ENCODE measurements at regions of chr16 and their contacts with region 1.

Region 1: GRCh38 chr16:69186642-69187445 is at the start of gene SNTB2:
- DNase-seq: peak; percentile 90
- ATAC-seq: peak; percentile 80
- H3K4me3 ChIP-seq: peak within 1 kb of the TSS; percentile 75 to 81 (median 76)
- H3K4me3 Mint-ChIP-seq: peak within 1 kb of the TSS; percentile 99
- H3K27ac ChIP-seq: peak within 1 kb of the TSS; percentile 72 to 77
- H3K27ac Mint-ChIP-seq: peak within 1 kb of the TSS; percentile 100
- H3K4me1 ChIP-seq: peaks cover 17 to 29% of the 10 kb centered on the region in 2 donors
- H3K4me1 Mint-ChIP-seq: peaks cover 32% of the 10 kb centered on the region
- H3K27me3 ChIP-seq: no peaks in the 10 kb centered on the region
- H3K27me3 Mint-ChIP-seq: no peaks in the 10 kb centered on the region
- CTCF ChIP-seq: no peak
- total RNA-seq, gene SNTB2: 16.2 and 19.3 TPM in 2 replicates

Region 2: DNA sequence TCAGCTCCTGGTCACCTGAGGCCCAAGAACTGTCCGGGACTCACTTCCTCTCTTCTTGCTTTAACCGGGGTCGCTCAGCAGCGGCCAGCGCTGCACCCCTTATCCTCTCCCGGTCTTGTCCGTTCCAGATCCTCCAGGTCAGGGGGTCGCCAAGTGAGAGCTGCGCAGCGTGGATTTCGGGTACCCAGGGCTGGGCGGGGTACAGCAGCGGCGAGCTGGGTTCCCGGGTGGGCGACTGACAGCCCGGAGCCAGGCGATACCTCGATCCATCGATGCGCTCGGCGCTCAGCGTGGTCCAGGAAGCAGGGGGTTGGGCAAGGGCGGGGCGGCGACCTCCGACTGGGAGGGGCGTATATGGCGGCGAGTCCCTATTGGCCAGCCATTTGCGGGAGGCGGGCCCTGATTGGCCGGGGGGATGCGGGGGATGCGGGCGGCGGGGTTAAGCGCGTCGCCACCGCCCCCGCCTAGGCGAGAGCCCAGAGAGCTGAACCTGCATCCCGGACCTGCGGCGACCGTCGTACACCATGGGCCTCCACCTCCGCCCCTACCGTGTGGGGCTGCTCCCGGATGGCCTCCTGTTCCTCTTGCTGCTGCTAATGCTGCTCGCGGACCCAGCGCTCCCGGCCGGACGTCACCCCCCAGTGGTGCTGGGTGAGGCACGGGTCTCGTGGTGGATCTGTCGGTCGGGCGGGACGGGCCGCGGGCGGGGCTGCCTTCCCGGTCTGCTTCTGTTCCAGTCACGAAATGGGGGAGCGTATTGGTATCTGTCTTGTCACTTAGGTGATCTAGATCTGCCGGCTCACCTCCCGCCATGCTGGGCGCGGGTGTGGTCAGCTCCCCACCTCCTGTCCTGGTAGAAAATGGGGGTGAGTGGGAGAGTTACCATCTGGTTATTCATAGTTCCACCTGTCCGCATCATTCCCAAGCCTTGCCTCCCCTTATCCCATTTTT is 941.7 kb before region 1 on chr16 and contains the start of gene PLA2G15:
- CTCF ChIA-PET with region 1: no interaction called
- POLR2A ChIA-PET with region 1: interaction called, 10 read pairs
- intact Hi-C with region 1: no loop called
- DNase-seq: peak; percentile 97
- ATAC-seq: peak; percentile 98
- H3K4me3 ChIP-seq: peak within 1 kb of the TSS; percentile 78 to 97 (median 96)
- H3K4me3 Mint-ChIP-seq: peak within 1 kb of the TSS; percentile 97
- H3K27ac ChIP-seq: peak within 1 kb of the TSS; percentile 12 to 28
- H3K27ac Mint-ChIP-seq: peak within 1 kb of the TSS; percentile 50
- H3K4me1 ChIP-seq: peaks cover 25 to 33% of the 10 kb centered on the region in 2 donors
- H3K4me1 Mint-ChIP-seq: peaks cover 32% of the 10 kb centered on the region
- H3K27me3 ChIP-seq: no peaks in the 10 kb centered on the region
- H3K27me3 Mint-ChIP-seq: no peaks in the 10 kb centered on the region
- CTCF ChIP-seq: no peak
- total RNA-seq, gene PLA2G15: 10.8 and 12.5 TPM in 2 replicates

Region 3: DNA sequence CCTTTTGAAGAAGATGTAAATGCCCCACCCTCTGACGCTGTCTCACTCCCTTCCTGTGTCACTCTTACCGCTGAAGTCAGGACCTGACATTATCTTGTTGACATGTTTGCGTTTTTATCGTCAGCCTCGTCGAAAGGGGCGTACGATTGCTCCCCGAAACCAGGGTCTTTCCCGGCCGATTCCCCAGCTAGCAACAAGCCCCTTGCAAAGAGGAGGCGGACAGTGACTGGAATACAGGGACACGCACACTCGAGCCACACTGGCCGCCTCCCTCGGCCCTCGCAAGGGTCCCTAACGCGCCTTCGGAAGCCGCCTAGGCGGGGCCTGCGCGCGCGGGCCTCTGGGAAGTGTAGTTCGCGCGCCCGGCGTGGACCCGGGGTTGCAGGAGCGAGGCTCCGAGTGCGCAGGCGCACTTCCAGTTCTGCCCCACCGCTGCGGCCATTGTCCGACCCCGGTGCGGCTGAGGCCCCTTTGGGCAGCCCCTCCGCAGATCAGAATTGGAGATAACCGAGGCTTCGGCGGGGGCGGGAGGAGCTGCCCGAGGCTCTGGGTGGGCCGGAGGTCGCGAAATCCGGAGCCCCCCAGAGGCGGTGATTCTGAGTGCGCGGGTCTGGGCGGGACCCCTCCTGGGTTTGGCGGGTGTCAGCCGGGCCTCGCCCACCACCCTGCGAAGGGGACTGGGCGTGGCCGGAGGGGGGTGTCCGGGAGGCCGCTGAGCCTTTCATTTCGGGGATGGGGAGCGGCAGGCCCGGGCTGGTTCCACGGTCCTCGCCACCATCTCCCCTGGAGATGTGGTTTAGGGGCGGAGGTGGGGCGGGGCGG is 647.8 kb before region 1 on chr16 and contains the start of gene ZFP90:
- CTCF ChIA-PET with region 1: no interaction called
- POLR2A ChIA-PET with region 1: no interaction called
- intact Hi-C with region 1: loop called (anchors 2 kb)
- DNase-seq: peak; percentile 91
- ATAC-seq: peak; percentile 96
- H3K4me3 ChIP-seq: peak within 1 kb of the TSS; percentile 67 to 97 (median 90)
- H3K4me3 Mint-ChIP-seq: peak within 1 kb of the TSS; percentile 95
- H3K27ac ChIP-seq: peak within 1 kb of the TSS; percentile 80 to 82
- H3K27ac Mint-ChIP-seq: peak within 1 kb of the TSS; percentile 97
- H3K4me1 ChIP-seq: peaks cover 8 to 16% of the 10 kb centered on the region in 2 donors
- H3K4me1 Mint-ChIP-seq: peaks cover 15% of the 10 kb centered on the region
- H3K27me3 ChIP-seq: no peaks in the 10 kb centered on the region
- H3K27me3 Mint-ChIP-seq: no peaks in the 10 kb centered on the region
- CTCF ChIP-seq: no peak
- total RNA-seq, gene ZFP90: 30.7 and 36.0 TPM in 2 replicates

Region 4: GRCh38 chr16:69132424-69133252 is 54.2 kb before region 1 on chr16 and contains the starts of genes CHTF8 and UTP4:
- CTCF ChIA-PET with region 1: no interaction called
- POLR2A ChIA-PET with region 1: interaction called, 6 read pairs
- intact Hi-C with region 1: loop called (anchors 1 kb)
- DNase-seq: peak; percentile 92
- ATAC-seq: peak; percentile 87
- H3K4me3 ChIP-seq: peak within 1 kb of the TSS; percentile 87 to 96 (median 89)
- H3K4me3 Mint-ChIP-seq: peak within 1 kb of the TSS; percentile 95
- H3K27ac ChIP-seq: peak within 1 kb of the TSS; percentile 66 to 90
- H3K27ac Mint-ChIP-seq: peak within 1 kb of the TSS; percentile 91
- H3K4me1 ChIP-seq: peaks cover 16 to 19% of the 10 kb centered on the region in 2 donors
- H3K4me1 Mint-ChIP-seq: peaks cover 41% of the 10 kb centered on the region
- H3K27me3 ChIP-seq: no peaks in the 10 kb centered on the region
- H3K27me3 Mint-ChIP-seq: no peaks in the 10 kb centered on the region
- CTCF ChIP-seq: no peak
- total RNA-seq, gene CHTF8: 112 and 118 TPM in 2 replicates
- total RNA-seq, gene UTP4: 29.4 and 30.1 TPM in 2 replicates

Region 5: DNA sequence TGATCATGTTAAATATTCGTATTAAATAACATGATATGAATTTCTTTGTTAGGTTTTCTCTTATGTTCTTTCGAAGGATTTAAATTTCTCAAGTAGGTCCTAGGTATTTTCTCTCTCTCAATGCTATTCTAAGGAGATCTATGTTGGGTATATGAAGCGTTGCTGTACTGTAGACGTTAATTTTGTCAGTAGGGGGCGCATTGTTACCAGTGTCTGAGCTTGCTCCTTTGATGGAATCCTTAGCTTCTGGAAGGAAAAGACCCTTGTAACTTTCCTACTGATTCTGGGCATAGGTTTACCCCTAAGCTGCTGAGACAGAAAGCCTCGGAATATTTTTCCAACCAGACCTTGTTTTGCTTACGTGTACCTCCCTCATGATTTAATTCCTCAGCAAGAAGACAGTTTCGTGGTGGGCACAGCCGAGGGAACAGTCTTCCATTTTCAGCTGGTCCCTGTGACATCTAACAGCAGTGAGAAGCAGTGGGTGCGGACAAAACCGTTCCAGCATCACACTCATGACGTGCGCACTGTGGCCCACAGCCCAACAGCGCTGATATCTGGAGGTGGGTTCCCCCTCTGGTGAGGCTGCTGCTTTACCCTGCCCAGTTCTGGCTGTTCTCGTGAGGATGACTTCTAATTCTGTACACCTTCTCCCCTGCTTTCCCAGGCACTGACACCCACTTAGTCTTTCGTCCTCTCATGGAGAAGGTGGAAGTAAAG is 36.5 kb before region 1 on chr16:
- CTCF ChIA-PET with region 1: interaction called, 12 read pairs
- POLR2A ChIA-PET with region 1: interaction called, 3 read pairs
- intact Hi-C with region 1: loop called (anchors 5 kb)
- DNase-seq: peak; percentile 79
- ATAC-seq: peak; percentile 71
- H3K4me3 ChIP-seq: no peak overlapping the region
- H3K4me3 Mint-ChIP-seq: no peak overlapping the region
- H3K27ac ChIP-seq: no peak overlapping the region
- H3K27ac Mint-ChIP-seq: no peak overlapping the region
- H3K4me1 ChIP-seq: no peaks in the 10 kb centered on the region
- H3K4me1 Mint-ChIP-seq: no peaks in the 10 kb centered on the region
- H3K27me3 ChIP-seq: no peaks in the 10 kb centered on the region
- H3K27me3 Mint-ChIP-seq: no peaks in the 10 kb centered on the region
- CTCF ChIP-seq: peak; percentile 84

Region 6: DNA sequence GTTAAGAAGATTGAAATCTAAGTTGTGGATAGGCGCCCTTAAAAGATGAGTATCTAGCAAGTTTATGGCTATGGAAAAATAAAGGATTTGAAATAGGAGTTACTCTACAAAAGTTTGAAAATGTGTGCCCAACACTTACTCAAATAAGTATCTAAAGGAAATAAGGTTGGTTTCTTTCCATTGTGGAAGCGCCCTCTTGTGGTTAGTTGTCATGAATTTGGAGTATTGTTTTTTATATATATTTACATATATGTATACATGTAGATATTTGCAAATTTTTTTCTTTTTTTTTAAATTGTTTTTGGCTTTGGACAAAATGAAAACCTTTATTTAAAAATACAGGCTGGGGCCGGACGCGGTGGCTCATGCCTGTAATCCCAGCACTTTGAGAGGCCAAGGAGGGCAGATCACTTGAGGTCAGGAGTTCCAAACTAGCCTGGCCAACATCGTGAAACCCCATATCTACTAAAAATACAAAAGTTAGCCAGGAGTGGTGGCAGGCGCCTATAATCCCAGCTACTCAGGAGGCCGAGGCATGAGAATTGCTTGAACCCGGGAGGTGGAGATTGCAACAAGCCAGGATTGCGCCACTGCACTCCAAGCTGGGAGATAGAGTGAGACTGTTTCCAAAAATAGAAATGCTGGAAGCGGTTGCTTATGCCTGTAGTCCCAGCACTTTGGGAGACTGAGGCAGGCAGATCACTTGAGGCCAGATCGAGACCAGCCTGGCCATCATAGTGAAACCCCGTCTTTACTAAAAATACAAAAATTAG is 100.3 kb after region 1 on chr16:
- CTCF ChIA-PET with region 1: interaction called, 22 read pairs
- POLR2A ChIA-PET with region 1: no interaction called
- intact Hi-C with region 1: no loop called
- DNase-seq: peak; percentile 75
- ATAC-seq: no peak
- H3K4me3 ChIP-seq: no peak overlapping the region
- H3K4me3 Mint-ChIP-seq: no peak overlapping the region
- H3K27ac ChIP-seq: no peak overlapping the region
- H3K27ac Mint-ChIP-seq: no peak overlapping the region
- H3K4me1 ChIP-seq: no peaks in the 10 kb centered on the region
- H3K4me1 Mint-ChIP-seq: peaks cover 1% of the 10 kb centered on the region
- H3K27me3 ChIP-seq: no peaks in the 10 kb centered on the region
- H3K27me3 Mint-ChIP-seq: no peaks in the 10 kb centered on the region
- CTCF ChIP-seq: peak; percentile 79

Region 7: DNA sequence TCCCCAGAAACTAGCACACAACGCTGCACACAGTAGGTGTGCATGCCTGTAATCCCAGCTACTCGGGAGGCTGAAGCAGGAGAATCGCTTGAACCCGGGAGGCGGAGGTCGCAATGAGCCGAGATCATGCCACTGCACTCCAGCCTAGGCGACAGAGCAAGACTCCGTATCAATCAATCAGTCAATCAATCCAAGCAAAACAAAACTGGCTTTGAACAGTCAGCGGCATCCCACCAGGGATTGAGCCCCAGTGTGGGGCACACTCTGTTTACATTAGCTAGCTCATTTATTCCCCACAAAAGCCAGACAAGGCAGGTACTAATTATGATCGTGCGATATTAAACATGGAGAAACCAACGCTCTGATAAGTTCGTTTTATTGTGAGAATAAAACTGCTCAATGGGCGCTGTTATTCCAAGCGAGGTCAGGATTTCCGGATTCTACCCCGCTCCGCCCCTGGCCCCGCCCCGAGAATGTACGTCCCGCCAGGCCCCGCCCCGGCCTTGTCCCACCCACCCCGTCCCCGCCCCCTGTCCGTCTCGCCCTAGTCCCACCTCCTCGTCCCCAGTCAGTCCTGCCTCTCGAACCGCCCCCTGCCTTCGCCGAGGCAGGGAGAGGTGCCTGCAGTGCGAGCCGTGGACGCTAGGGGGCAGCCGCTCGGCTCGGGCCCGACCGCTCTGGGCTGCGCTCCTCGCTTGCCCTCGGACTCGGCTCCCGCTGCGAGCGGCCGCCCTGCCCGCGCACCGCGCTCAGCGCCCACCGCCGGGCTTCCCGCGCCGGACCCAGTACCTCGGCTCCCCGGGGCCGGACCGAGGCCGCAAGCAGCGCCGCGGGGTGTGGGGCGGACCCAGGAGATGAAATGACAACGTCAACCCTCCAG is 124.0 kb after region 1 on chr16 and contains the start of gene VPS4A:
- CTCF ChIA-PET with region 1: no interaction called
- POLR2A ChIA-PET with region 1: no interaction called
- intact Hi-C with region 1: loop called (anchors 1 kb)
- DNase-seq: peak; percentile 97
- ATAC-seq: peak; percentile 98
- H3K4me3 ChIP-seq: peak within 1 kb of the TSS; percentile 62 to 89 (median 67)
- H3K4me3 Mint-ChIP-seq: peak within 1 kb of the TSS; percentile 99
- H3K27ac ChIP-seq: peak within 1 kb of the TSS; percentile 75 to 84
- H3K27ac Mint-ChIP-seq: peak within 1 kb of the TSS; percentile 94
- H3K4me1 ChIP-seq: peaks cover 10 to 23% of the 10 kb centered on the region in 2 donors
- H3K4me1 Mint-ChIP-seq: peaks cover 24% of the 10 kb centered on the region
- H3K27me3 ChIP-seq: no peaks in the 10 kb centered on the region
- H3K27me3 Mint-ChIP-seq: no peaks in the 10 kb centered on the region
- CTCF ChIP-seq: peak; percentile 86
- total RNA-seq, gene VPS4A: 41.4 and 43.8 TPM in 2 replicates

Measured in B cell (primary cell).